Body of pancreas (tissue), 4 donors: ENCODE measurements at regions of chr11 and their contacts with region 1.

Region 1: DNA sequence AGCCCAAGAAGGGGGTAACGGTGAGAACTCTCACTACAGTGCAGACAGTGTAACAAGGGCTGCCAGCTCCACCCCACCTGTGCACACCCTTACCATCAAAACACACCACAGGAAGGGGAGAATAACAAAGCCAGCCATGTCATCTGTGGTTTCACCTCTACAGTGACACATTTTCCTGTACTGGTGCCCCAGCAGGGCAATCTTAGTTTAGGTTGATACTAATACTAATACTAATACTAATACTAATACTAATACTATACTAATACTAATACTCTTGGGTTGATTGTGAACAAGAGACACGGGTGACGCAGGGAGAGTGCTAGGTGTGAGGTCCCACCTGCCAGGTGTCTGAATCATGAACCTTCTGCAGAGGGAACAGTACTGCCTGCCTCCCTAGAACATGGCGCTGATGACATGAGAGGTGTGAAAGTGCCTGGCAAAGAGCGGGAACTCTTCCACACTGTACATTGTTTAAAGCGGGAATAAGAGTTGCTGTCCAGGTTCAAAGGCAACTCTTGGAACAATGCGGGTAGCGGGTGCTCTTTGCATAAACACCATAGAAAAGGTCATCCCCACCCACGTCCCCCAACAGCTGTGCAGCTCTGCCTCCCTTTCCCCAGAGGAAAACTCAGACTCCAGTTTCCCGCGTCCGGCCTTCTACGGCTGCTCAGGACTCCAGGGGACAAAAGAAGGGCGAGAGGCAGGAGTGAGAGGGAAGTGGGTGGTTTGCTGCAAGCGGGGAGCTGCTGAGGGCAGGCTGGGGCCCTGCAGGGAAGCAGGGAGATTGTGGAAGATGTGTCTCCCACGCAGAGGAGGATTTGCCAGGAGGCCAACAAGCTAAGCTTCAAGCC is 25.0 kb upstream of the TMPRSS4 start:
- DNase-seq: no peak
- ATAC-seq: no peak
- H3K4me3 ChIP-seq: no peak overlapping the region
- H3K27ac ChIP-seq: no peak overlapping the region
- H3K4me1 ChIP-seq: no peaks in the 10 kb centered on the region
- H3K27me3 ChIP-seq: no peaks in the 10 kb centered on the region
- CTCF ChIP-seq: no peak
- POLR2A ChIP-seq: no peak

Region 2: GRCh38 chr11:117443266-117444195 is 608.3 kb before region 1 on chr11:
- intact Hi-C with region 1: loop called (anchors 10 kb)
- DNase-seq: peak; percentile 45 to 72 (median 66)
- ATAC-seq: peak; percentile 71
- H3K4me3 ChIP-seq: no peak overlapping the region
- H3K27ac ChIP-seq: no peak overlapping the region
- H3K4me1 ChIP-seq: peaks cover 7% of the 10 kb centered on the region
- H3K27me3 ChIP-seq: no peaks in the 10 kb centered on the region
- CTCF ChIP-seq: peak; percentile 19 to 70 (median 54)
- POLR2A ChIP-seq: no peak

Region 3: DNA sequence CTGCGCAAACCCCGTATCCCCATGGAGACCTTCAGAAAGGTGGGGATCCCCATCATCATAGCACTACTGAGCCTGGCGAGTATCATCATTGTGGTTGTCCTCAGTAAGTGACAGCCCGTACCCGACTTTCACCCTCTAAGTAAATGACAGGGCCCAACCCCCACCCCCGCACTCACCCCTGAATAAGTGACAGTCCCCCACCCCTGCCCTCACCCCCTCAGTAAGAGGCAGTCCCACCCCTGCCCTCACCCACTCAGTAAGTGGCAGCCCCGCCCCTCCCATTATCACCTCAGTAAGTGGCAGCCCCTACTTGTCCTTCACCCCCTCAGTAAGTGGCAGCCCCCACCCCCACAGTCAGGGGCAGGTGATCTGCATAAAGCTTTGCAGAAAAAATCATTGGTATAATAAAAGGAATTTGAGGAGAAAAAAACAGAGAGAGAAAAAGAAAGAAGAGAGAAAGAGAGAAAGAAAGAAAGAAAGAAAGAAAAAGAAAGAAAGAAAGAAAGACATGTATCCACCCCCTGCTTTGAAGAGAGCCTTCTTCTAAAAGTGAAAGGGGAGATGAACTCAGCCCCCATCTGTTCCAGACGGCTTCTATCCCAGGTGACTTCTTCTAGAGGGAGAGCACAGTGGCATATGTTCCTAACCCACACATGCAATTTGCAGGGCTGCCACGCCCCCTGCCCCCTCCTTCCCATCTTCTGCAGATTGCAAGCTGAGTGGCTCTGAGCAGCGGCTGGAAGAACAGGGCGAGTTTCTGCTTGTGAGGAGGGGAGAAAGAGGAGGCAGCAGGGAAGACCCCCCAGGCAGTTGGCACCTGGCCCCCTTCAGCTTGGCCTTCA is 47.4 kb after region 1 on chr11:
- intact Hi-C with region 1: no loop called
- DNase-seq: no peak
- ATAC-seq: no peak
- H3K4me3 ChIP-seq: no peak overlapping the region
- H3K27ac ChIP-seq: no peak overlapping the region
- H3K4me1 ChIP-seq: no peaks in the 10 kb centered on the region
- H3K27me3 ChIP-seq: no peaks in the 10 kb centered on the region
- CTCF ChIP-seq: no peak
- POLR2A ChIP-seq: no peak

Region 4: GRCh38 chr11:118109231-118109630 is 57.4 kb after region 1 on chr11:
- intact Hi-C with region 1: no loop called
- DNase-seq: no peak
- ATAC-seq: no peak
- H3K4me3 ChIP-seq: no peak overlapping the region
- H3K27ac ChIP-seq: no peak overlapping the region
- H3K4me1 ChIP-seq: no peaks in the 10 kb centered on the region
- H3K27me3 ChIP-seq: no peaks in the 10 kb centered on the region
- CTCF ChIP-seq: no peak
- POLR2A ChIP-seq: no peak